ENCODE measurements at regions of chr13 and their contacts with region 1.

Region 1: DNA sequence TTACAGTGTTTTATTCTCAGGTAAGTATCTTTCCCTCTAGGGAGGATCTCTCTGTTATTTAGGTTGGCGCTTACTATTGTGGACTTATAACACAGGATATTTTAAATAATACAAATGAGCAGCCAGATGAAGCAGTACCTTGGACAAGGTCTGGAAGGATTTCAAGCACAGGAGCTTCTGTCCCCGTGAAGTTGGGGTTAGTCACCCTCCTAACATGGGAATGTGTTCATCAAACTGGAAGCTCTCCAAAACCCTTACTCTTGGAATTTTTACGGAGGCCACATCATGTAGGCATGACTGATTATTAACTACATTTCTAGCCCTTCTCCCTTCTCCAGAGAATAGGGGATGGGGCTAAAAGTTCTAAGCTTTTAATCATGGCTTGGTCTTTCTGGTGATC is 38.3 kb upstream of the SPRY2 start:
- DNase-seq: no peak
- ATAC-seq: no peak
- H3K4me3 ChIP-seq: no peak overlapping the region
- H3K27ac ChIP-seq: no peak overlapping the region
- H3K4me1 ChIP-seq: peaks cover 14% of the 10 kb centered on the region
- H3K27me3 ChIP-seq: no peaks in the 10 kb centered on the region
- CTCF ChIP-seq: no peak
- POLR2A ChIP-seq: no peak

Region 2: GRCh38 chr13:79679334-79679733 is 699.9 kb before region 1 on chr13:
- intact Hi-C with region 1: loop called (anchors 10 kb)
- DNase-seq: peak; percentile 81 to 87 (median 85)
- ATAC-seq: peak; percentile 84
- H3K4me3 ChIP-seq: no peak overlapping the region
- H3K27ac ChIP-seq: no peak overlapping the region
- H3K4me1 ChIP-seq: peaks cover 6% of the 10 kb centered on the region
- H3K27me3 ChIP-seq: no peaks in the 10 kb centered on the region
- CTCF ChIP-seq: peak; percentile 61 to 86 (median 79)
- POLR2A ChIP-seq: no peak

Region 3: DNA sequence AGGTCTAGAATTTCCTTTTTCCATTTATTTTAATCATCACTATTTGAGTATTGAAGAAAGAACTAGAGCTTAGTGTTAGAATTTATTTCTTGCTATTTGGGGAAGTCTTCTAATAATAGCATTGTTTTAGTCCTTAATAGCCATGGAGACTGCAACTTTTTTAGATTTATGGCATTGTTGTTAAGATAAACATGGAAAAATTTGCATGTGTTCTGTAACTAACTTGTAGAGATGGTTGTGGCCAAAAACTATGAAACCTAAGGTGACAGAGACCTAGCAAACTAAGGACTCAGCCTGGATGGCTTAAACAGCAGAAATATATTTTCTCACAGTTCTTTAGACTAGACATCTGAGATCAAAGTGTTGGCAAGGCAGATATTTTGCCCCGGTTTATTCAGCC is 284.7 kb before region 1 on chr13:
- intact Hi-C with region 1: no loop called
- DNase-seq: no peak
- ATAC-seq: no peak
- H3K4me3 ChIP-seq: no peak overlapping the region
- H3K27ac ChIP-seq: no peak overlapping the region
- H3K4me1 ChIP-seq: no peaks in the 10 kb centered on the region
- H3K27me3 ChIP-seq: no peaks in the 10 kb centered on the region
- CTCF ChIP-seq: no peak
- POLR2A ChIP-seq: no peak

Measured in body of pancreas (tissue), 4 donors.